Activated naive CD4-positive, alpha-beta T cell treated with anti-CD3 and anti-CD28 coated beads for 36 hours (primary cell): ENCODE measurements at regions of chrX and their contacts with region 1.

Region 1: DNA sequence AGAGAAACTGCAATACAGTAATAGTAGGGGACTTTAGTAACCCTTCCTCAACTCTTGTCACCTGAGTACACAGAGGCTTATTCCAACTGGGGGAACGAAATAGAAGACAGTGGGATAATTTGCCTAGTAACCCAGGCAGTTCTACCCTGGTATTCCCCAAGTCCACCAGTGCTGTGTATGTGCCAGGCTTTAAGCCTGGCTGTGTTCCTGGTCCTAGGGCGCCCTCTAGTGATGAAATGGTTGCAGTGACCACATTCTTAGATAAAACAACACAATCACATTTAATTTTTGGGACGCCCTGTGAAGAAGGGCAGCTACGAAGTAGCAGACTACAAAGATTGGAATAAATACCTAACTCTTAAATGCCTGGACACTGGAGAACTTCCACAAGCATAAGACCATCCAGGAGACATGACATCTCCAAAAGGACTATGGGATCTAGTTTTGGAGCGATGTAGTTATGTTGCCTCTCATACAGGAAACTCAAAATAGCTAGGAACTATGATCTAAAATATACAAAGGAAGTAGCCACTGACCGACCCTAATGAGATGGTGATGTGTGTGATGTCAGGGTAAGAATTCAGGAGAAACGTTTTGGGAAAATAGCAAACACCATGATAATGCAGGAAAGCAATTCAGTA is 288.5 kb upstream of the ZCCHC13 start:
- DNase-seq: peak; percentile 72
- H3K4me3 Mint-ChIP-seq: no peak overlapping the region
- H3K27ac Mint-ChIP-seq: no peak overlapping the region
- H3K4me1 Mint-ChIP-seq: no peaks in the 10 kb centered on the region
- H3K27me3 Mint-ChIP-seq: no peaks in the 10 kb centered on the region

Region 2: GRCh38 chrX:74133156-74133796 is 117.8 kb after region 1 on chrX:
- CTCF ChIA-PET with region 1: interaction called, 4 read pairs
- intact Hi-C with region 1: loop called (anchors 1 kb)
- DNase-seq: peak; percentile 5
- H3K4me3 Mint-ChIP-seq: no peak overlapping the region
- H3K27ac Mint-ChIP-seq: no peak overlapping the region
- H3K4me1 Mint-ChIP-seq: no peaks in the 10 kb centered on the region
- H3K27me3 Mint-ChIP-seq: no peaks in the 10 kb centered on the region

Region 3: DNA sequence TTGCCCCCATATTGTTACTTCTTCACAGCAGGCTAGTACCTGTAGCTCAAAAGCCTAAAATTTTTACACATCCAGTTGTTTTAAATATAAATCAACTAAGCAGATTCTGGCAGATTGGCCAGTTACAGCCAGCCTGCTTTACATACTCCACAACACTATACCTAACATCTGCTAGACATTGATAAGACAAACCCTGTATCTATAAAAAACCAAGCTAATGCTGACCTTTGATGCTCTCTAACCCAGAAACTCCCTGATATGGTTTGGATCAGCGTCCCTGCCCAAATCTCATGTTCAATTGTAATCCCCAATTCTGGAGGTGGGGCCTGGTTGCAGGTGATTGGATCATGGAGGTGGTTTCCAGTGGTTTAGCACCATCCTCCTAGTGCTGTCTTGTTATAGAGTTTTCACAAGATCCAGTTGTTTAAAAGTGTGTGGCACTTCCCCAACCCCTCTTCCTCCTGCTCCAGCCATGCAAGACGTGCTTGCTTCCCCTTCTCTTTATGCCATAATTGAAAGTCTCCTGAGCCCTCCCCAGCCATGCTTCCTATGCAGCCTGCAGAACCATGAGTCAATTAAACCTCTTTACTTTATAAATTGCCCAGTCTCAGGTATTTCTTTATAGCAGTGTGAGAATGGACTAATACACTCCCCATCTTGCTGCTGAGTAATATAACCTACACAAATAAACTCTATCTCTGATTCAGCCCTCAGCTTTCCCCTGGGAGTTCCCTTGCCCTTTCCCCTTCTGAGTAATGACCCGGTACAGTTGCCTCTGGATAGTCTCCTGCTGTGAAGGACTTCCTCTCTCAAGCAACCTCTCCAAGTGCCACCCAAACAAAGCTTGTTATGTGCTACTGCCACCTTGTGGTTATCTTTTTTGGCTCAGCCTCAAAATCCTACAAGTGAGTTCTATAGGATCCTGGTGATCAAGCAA is 328.1 kb after region 1 on chrX:
- CTCF ChIA-PET with region 1: no interaction called
- intact Hi-C with region 1: loop called (anchors 1 kb)
- DNase-seq: peak; percentile 53
- H3K4me3 Mint-ChIP-seq: no peak overlapping the region
- H3K27ac Mint-ChIP-seq: no peak overlapping the region
- H3K4me1 Mint-ChIP-seq: peaks cover 4% of the 10 kb centered on the region
- H3K27me3 Mint-ChIP-seq: no peaks in the 10 kb centered on the region